ENCODE measurements at regions of chr1 and their contacts with region 1.

Region 1: GRCh38 chr1:31394628-31395193 is 18.3 kb upstream of the SERINC2 start:
- DNase-seq: peak; percentile 94
- H3K4me3 Mint-ChIP-seq: peak overlapping the region; percentile 84
- H3K27ac Mint-ChIP-seq: no peak overlapping the region
- H3K4me1 Mint-ChIP-seq: peaks cover 11% of the 10 kb centered on the region
- H3K27me3 Mint-ChIP-seq: peaks cover 10% of the 10 kb centered on the region

Region 2: DNA sequence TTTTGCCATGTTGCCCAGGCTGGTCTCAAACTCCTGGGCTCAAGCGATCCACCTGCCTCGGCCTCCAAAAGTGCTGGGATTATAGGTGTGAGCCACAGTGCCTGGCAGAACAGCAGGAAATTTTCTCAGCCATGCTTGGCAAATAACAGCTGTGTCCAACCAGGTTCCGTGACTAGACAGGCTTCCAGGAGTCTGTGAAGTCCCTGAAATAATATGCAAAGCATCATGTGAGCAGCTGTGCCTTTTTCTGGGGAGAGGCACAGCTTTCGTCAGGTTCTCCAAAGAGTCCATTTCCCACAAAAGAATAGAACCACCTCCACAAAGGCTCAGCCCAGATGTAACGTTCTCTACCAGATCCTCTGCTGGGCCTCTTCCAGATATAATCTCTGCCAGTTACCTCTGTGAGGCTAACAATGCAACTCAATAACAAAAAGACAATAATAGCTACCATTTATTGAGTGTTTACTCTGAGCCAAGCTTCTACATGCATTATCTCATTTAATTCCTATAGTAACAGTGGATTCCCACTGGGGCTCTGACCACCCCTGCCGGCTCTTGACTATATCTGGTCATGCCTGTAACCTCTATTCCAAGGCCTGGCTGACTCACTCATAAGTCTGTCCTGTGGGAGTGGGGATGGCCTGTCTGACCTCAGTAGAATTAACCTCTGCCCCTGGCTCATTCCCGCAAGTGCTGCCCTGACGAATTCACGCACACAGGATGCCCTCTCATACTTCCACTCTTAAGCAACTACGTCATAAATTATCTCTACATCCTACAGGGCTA is 151.0 kb before region 1 on chr1:
- intact Hi-C with region 1: no loop called
- DNase-seq: no peak
- H3K4me3 Mint-ChIP-seq: no peak overlapping the region
- H3K27ac Mint-ChIP-seq: no peak overlapping the region
- H3K4me1 Mint-ChIP-seq: peaks cover 10% of the 10 kb centered on the region
- H3K27me3 Mint-ChIP-seq: peaks cover 22% of the 10 kb centered on the region

Region 3: GRCh38 chr1:31422505-31423319 is 28.0 kb after region 1 on chr1:
- intact Hi-C with region 1: loop called (anchors 1 kb)
- DNase-seq: peak; percentile 89
- H3K4me3 Mint-ChIP-seq: no peak overlapping the region
- H3K27ac Mint-ChIP-seq: no peak overlapping the region
- H3K4me1 Mint-ChIP-seq: no peaks in the 10 kb centered on the region
- H3K27me3 Mint-ChIP-seq: peaks cover 19% of the 10 kb centered on the region